ENCODE measurements at regions of chr2 and their contacts with region 1.

Region 1: GRCh38 chr2:161946489-161947107 is 127.4 kb downstream of the DPP4 start:
- DNase-seq: no peak

Region 2: DNA sequence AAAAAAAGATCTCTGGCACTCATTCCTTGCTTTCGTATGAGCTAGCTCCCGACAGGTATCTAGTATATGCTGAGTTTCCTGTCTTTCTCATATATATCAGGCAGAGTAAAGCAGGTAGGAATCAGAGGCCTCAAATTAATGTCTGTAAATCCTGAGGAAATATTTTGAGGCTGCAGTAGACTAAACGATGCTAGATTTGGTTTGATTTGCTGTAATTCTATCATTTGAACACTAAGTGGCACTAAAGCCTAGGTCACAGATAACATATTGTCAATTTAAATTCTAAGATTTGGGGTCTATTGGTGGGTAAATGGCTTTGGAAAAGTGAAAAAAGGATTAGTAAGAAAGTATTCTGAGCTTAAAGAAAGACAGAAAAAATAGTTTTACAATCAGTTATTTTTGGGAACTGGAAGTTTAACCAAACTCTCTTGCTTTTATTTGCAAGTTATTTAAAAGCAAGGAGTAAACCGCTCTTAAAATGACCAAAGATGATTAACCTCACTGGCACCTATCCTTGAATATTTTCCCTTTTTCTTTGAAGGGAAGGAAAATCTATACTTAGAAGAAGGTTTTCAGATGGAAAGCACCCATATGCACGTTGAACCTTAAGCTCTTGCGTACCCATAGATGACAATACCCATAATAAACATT is 360.0 kb before region 1 on chr2:
- intact Hi-C with region 1: loop called (anchors 5 kb)
- DNase-seq: no peak

Region 3: GRCh38 chr2:161975062-161975812 is 28.6 kb after region 1 on chr2:
- intact Hi-C with region 1: no loop called
- DNase-seq: no peak

Measured in cardiac septum (tissue), 1 donor.